HepG2 (cell line): ENCODE measurements at regions of chr14 and their contacts with region 1.

Region 1: GRCh38 chr14:68577827-68578541 is 214.9 kb downstream of the ZFP36L1 start:
- DNase-seq: peak; percentile 97
- ATAC-seq: peak; percentile 93
- H3K4me3 ChIP-seq: no peak overlapping the region; a peak in 1 of 6 replicates
- H3K27ac ChIP-seq: peak overlapping the region; percentile 21
- H3K4me1 ChIP-seq: peaks cover 38% of the 10 kb centered on the region
- H3K27me3 ChIP-seq: no peaks in the 10 kb centered on the region
- CTCF ChIP-seq: no peak
- EP300 ChIP-seq: peak; percentile 82 to 83
- POLR2A ChIP-seq: no peak
- RAD21 ChIP-seq: no peak

Region 2: GRCh38 chr14:68520637-68521556 is 57.1 kb before region 1 on chr14:
- CTCF ChIA-PET with region 1: no interaction called
- POLR2A ChIA-PET with region 1: no interaction called
- in situ Hi-C with region 1: no loop called
- intact Hi-C with region 1: loop called (anchors 5 kb)
- DNase-seq: peak; percentile 86
- ATAC-seq: peak; percentile 75
- H3K4me3 ChIP-seq: peak overlapping the region in 2 of 3 experiments; percentile 47 to 67; a peak in 4 of 6 replicates
- H3K27ac ChIP-seq: peak overlapping the region; percentile 84
- H3K4me1 ChIP-seq: peaks cover 69% of the 10 kb centered on the region
- H3K27me3 ChIP-seq: no peaks in the 10 kb centered on the region
- CTCF ChIP-seq: no peak
- EP300 ChIP-seq: peak in 1 of 2 experiments; percentile 47; a peak in 1 of 4 replicates
- POLR2A ChIP-seq: no peak; a peak in 1 of 4 replicates
- RAD21 ChIP-seq: no peak

Region 3: DNA sequence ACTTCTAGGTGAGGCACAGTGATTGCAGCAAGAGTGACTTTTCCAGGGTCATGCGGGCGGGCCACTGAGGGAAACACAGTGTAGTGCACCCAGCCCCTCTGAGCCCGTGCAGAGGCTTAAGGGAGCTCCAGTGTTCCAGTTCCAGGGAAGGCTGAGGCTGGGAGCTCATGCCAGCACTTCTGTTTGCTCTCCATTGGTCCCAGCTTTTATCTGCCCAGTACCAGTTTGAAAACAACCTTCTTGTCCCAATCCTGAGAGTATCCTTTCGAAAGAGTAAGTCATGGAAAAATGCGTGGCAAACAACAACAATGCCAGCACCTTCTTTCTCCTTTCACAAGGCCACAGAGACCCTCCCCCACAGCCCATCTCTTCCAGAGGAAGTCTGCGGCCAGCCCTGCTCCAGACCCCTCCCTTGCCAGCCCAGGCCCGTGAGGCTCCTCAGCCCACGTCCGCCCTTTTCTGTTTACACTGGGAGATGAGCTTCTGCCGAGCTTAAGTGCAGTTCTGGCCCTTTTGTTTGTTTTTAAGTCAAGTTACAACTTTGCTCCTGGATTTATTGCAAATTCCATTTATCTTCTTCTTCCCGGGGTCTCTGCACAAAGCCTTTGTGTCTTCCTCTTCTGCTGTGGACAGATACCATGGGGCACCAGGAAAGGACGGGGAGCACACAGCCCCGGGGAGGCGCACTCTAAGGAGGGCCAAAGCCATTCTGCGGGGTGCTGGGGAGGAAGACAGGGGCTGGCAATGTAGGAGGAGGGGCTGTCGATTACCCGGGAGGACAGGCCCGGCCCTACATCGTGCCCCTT is 29.3 kb after region 1 on chr14:
- CTCF ChIA-PET with region 1: no interaction called
- POLR2A ChIA-PET with region 1: no interaction called
- in situ Hi-C with region 1: no loop called
- intact Hi-C with region 1: loop called (anchors 1 kb)
- DNase-seq: peak; percentile 68
- ATAC-seq: peak; percentile 76
- H3K4me3 ChIP-seq: peak overlapping the region in 1 of 3 experiments; percentile 55; a peak in 3 of 6 replicates
- H3K27ac ChIP-seq: peak overlapping the region; percentile 59
- H3K4me1 ChIP-seq: peaks cover 84% of the 10 kb centered on the region
- H3K27me3 ChIP-seq: no peaks in the 10 kb centered on the region
- CTCF ChIP-seq: peak; percentile 18; the same call in 1 of the 2 replicates
- EP300 ChIP-seq: peak in 1 of 2 experiments; percentile 73; a peak in 2 of 4 replicates
- POLR2A ChIP-seq: 0 out of 4 replicates have a peak, but pooled peaks of 1 of the 2 experiments have one; percentile 25
- RAD21 ChIP-seq: no peak

Region 4: GRCh38 chr14:68685419-68686204 is 107.6 kb after region 1 on chr14:
- CTCF ChIA-PET with region 1: no interaction called
- POLR2A ChIA-PET with region 1: no interaction called
- in situ Hi-C with region 1: no loop called
- intact Hi-C with region 1: no loop called
- DNase-seq: peak; percentile 60
- ATAC-seq: peak; percentile 31; the same call in 2 of the 3 replicates
- H3K4me3 ChIP-seq: no peak overlapping the region; a peak in 1 of 6 replicates
- H3K27ac ChIP-seq: no peak overlapping the region
- H3K4me1 ChIP-seq: peaks cover 57% of the 10 kb centered on the region
- H3K27me3 ChIP-seq: peaks cover 0 to 31% of the 10 kb centered on the region in 2 experiments; a peak in 4 of 5 replicates
- CTCF ChIP-seq: no peak
- EP300 ChIP-seq: no peak
- POLR2A ChIP-seq: no peak
- RAD21 ChIP-seq: no peak

Region 5: GRCh38 chr14:69376439-69376838 is 798.5 kb after region 1 on chr14:
- CTCF ChIA-PET with region 1: no interaction called
- POLR2A ChIA-PET with region 1: no interaction called
- in situ Hi-C with region 1: no loop called
- intact Hi-C with region 1: no loop called
- DNase-seq: peak; percentile 40
- ATAC-seq: no peak
- H3K4me3 ChIP-seq: no peak overlapping the region
- H3K27ac ChIP-seq: no peak overlapping the region
- H3K4me1 ChIP-seq: 0 out of 2 replicates have a peak, but pooled peaks cover 9% of the 10 kb centered on the region
- H3K27me3 ChIP-seq: no peaks in the 10 kb centered on the region
- CTCF ChIP-seq: no peak
- EP300 ChIP-seq: no peak
- POLR2A ChIP-seq: no peak
- RAD21 ChIP-seq: no peak